ENCODE measurements at regions of chr22 and their contacts with region 1.

Region 1: GRCh38 chr22:40636380-40637182 is at the start of gene MRTFA:
- DNase-seq: peak; percentile 90 to 99 (median 98)
- ATAC-seq: peak; percentile 96
- H3K4me3 ChIP-seq: peak within 1 kb of the TSS; percentile 84
- H3K4me3 Mint-ChIP-seq: peak within 1 kb of the TSS; percentile 94 to 100 (median 97)
- H3K27ac ChIP-seq: peak within 1 kb of the TSS; percentile 85
- H3K27ac Mint-ChIP-seq: peak within 1 kb of the TSS; percentile 96 to 99 (median 97)
- H3K4me1 ChIP-seq: peaks cover 14 to 27% of the 10 kb centered on the region in 2 donors
- H3K4me1 Mint-ChIP-seq: peaks cover 27 to 56% (median 44%) of the 10 kb centered on the region in 7 donors
- H3K27me3 ChIP-seq: no peaks in the 10 kb centered on the region
- H3K27me3 Mint-ChIP-seq: no peaks in the 10 kb centered on the region
- total RNA-seq, gene MRTFA: 64.0 to 114 (median 104) TPM

Region 2: GRCh38 chr22:40368016-40368415 is 268.6 kb before region 1 on chr22:
- CTCF ChIA-PET with region 1: no interaction called
- POLR2A ChIA-PET with region 1: no interaction called
- intact Hi-C with region 1: loop called (anchors 2 to 5 kb)
- DNase-seq: no peak
- ATAC-seq: no peak
- H3K4me3 ChIP-seq: no peak overlapping the region
- H3K4me3 Mint-ChIP-seq: peak overlapping the region in 2 of 10 donors; percentile 17 to 33
- H3K27ac ChIP-seq: no peak overlapping the region
- H3K27ac Mint-ChIP-seq: peak overlapping the region in 1 of 9 donors; percentile 41
- H3K4me1 ChIP-seq: peaks cover 3 to 13% of the 10 kb centered on the region in 2 donors
- H3K4me1 Mint-ChIP-seq: peaks cover 12 to 23% (median 17%) of the 10 kb centered on the region in 7 donors
- H3K27me3 ChIP-seq: no peaks in the 10 kb centered on the region
- H3K27me3 Mint-ChIP-seq: no peaks in the 10 kb centered on the region

Region 3: DNA sequence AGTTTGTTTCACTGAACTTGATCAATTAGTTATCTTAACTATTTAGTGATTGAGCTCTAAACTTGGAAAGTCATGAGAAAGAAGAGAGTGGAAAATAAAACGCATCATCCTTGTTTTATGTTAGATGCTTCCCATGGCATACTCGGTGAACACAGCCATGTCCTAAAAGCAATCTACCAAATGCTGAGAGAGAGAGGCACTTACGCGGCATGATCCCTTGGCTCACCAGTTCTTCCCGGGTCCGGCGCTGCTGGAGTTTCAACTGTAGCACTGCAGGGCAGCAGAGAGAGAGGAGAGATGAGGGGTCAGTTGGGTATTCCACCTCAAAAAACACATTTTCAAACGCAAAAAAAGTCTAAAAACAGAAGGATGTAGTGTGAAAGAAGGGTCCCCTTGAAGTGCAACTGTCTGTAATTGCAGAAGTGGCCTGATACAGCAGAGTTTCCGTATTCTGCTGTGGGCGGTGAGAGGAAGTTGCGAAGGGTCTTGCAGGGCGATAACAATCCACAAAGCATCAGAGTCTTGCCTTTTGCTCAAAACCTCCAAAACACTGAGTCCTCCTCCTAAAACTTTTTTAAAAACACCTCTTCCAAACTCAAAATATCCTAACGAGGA is 173.5 kb before region 1 on chr22:
- CTCF ChIA-PET with region 1: interaction called, 3 read pairs
- POLR2A ChIA-PET with region 1: interaction called, 4 read pairs
- intact Hi-C with region 1: loop called in 1 of 2 experiments (anchors 1 kb)
- DNase-seq: peak in 8 of 9 donors; percentile 36 to 65 (median 50)
- ATAC-seq: peak; percentile 88
- H3K4me3 ChIP-seq: peak overlapping the region; percentile 90
- H3K4me3 Mint-ChIP-seq: peak overlapping the region; percentile 87 to 97 (median 96)
- H3K27ac ChIP-seq: peak overlapping the region; percentile 80
- H3K27ac Mint-ChIP-seq: peak overlapping the region; percentile 93 to 99 (median 97)
- H3K4me1 ChIP-seq: peaks cover 41 to 53% of the 10 kb centered on the region in 2 donors
- H3K4me1 Mint-ChIP-seq: peaks cover 46 to 92% (median 76%) of the 10 kb centered on the region in 7 donors
- H3K27me3 ChIP-seq: no peaks in the 10 kb centered on the region
- H3K27me3 Mint-ChIP-seq: no peaks in the 10 kb centered on the region

Region 4: GRCh38 chr22:40525249-40525884 is 111.2 kb before region 1 on chr22:
- CTCF ChIA-PET with region 1: interaction called, 10 read pairs
- POLR2A ChIA-PET with region 1: interaction called, 30 read pairs
- intact Hi-C with region 1: loop called in 1 of 2 experiments (anchors 2 kb)
- DNase-seq: peak; percentile 58 to 80 (median 76)
- ATAC-seq: peak; percentile 74
- H3K4me3 ChIP-seq: no peak overlapping the region
- H3K4me3 Mint-ChIP-seq: peak overlapping the region in 1 of 10 donors; percentile 48
- H3K27ac ChIP-seq: no peak overlapping the region
- H3K27ac Mint-ChIP-seq: peak overlapping the region in 8 of 9 donors; percentile 7 to 86 (median 58)
- H3K4me1 ChIP-seq: peaks cover 0 to 11% of the 10 kb centered on the region in 2 donors
- H3K4me1 Mint-ChIP-seq: peaks cover 13 to 55% (median 51%) of the 10 kb centered on the region in 7 donors
- H3K27me3 ChIP-seq: no peaks in the 10 kb centered on the region
- H3K27me3 Mint-ChIP-seq: no peaks in the 10 kb centered on the region

Region 5: DNA sequence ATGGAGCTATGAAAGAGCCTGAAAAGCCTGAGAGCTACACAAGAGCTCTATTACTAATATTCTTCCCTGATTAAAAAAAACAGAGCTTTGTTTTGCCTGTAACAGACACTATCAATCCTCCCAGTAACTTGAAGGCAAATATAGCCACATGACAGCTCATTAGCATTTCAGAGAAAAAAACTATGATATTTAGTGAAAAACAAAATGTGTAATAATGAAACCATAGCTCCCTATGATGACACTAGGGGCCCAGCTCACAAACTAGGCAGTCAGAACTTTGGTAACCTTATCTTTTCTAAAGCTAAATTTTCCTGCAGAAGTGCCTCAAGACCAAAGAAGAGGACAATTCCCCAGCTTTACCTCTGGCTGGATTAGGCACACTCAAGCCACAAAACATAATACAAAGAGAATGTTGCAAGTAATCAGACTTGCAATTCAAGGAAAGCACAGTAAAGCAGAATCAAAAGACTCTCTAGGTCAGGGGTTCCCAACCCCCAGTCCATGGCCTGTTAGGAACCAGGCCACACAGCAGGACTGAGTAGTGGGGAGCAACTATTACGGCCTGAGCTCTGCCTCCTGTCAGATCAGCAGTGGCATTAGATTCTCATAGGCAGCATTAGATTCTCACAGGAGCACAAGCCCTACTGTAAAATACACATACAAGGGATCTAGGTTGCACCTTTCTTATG is 53.4 kb before region 1 on chr22:
- CTCF ChIA-PET with region 1: no interaction called
- POLR2A ChIA-PET with region 1: interaction called, 3 read pairs
- intact Hi-C with region 1: loop called in 1 of 2 experiments (anchors 5 kb)
- DNase-seq: no peak
- ATAC-seq: no peak
- H3K4me3 ChIP-seq: no peak overlapping the region
- H3K4me3 Mint-ChIP-seq: peak overlapping the region in 1 of 10 donors; percentile 13
- H3K27ac ChIP-seq: no peak overlapping the region
- H3K27ac Mint-ChIP-seq: peak overlapping the region in 7 of 9 donors; percentile 6 to 60 (median 33)
- H3K4me1 ChIP-seq: peaks cover 0 to 8% of the 10 kb centered on the region in 2 donors
- H3K4me1 Mint-ChIP-seq: peaks cover 9 to 52% (median 37%) of the 10 kb centered on the region in 7 donors
- H3K27me3 ChIP-seq: no peaks in the 10 kb centered on the region
- H3K27me3 Mint-ChIP-seq: no peaks in the 10 kb centered on the region

Region 6: GRCh38 chr22:40714192-40714951 is 77.8 kb after region 1 on chr22:
- CTCF ChIA-PET with region 1: no interaction called
- POLR2A ChIA-PET with region 1: no interaction called
- intact Hi-C with region 1: no loop called
- DNase-seq: no peak
- ATAC-seq: no peak
- H3K4me3 ChIP-seq: no peak overlapping the region
- H3K4me3 Mint-ChIP-seq: peak overlapping the region in 9 of 10 donors; percentile 14 to 76 (median 62)
- H3K27ac ChIP-seq: no peak overlapping the region
- H3K27ac Mint-ChIP-seq: peak overlapping the region in 2 of 9 donors; percentile 31 to 46
- H3K4me1 ChIP-seq: peaks cover 0 to 5% of the 10 kb centered on the region in 2 donors
- H3K4me1 Mint-ChIP-seq: peaks cover 10 to 27% (median 21%) of the 10 kb centered on the region in 7 donors
- H3K27me3 ChIP-seq: no peaks in the 10 kb centered on the region
- H3K27me3 Mint-ChIP-seq: peaks cover 0 to 11% (median 0%) of the 10 kb centered on the region in 5 donors

Region 7: GRCh38 chr22:40950962-40951794 is 314.6 kb after region 1 on chr22 and contains the start of gene RBX1:
- CTCF ChIA-PET with region 1: no interaction called
- POLR2A ChIA-PET with region 1: interaction called, 3 read pairs
- intact Hi-C with region 1: loop called (anchors 1 kb)
- DNase-seq: peak; percentile 96 to 100 (median 99)
- ATAC-seq: peak; percentile 92
- H3K4me3 ChIP-seq: peak within 1 kb of the TSS; percentile 98
- H3K4me3 Mint-ChIP-seq: peak within 1 kb of the TSS; percentile 91 to 99 (median 98)
- H3K27ac ChIP-seq: peak within 1 kb of the TSS; percentile 99
- H3K27ac Mint-ChIP-seq: peak within 1 kb of the TSS; percentile 96 to 100 (median 99)
- H3K4me1 ChIP-seq: peaks cover 16 to 19% of the 10 kb centered on the region in 2 donors
- H3K4me1 Mint-ChIP-seq: peaks cover 20 to 43% (median 39%) of the 10 kb centered on the region in 7 donors
- H3K27me3 ChIP-seq: no peaks in the 10 kb centered on the region
- H3K27me3 Mint-ChIP-seq: no peaks in the 10 kb centered on the region
- total RNA-seq, gene RBX1: 28.9 to 91.3 (median 32.7) TPM

Region 8: GRCh38 chr22:41543854-41544670 is 907.5 kb after region 1 on chr22 and contains the start of gene POLR3H:
- CTCF ChIA-PET with region 1: no interaction called
- POLR2A ChIA-PET with region 1: no interaction called
- intact Hi-C with region 1: loop called in 1 of 2 experiments (anchors 10 kb)
- DNase-seq: peak; percentile 89 to 97 (median 95)
- ATAC-seq: peak; percentile 100
- H3K4me3 ChIP-seq: peak within 1 kb of the TSS; percentile 96
- H3K4me3 Mint-ChIP-seq: peak within 1 kb of the TSS; percentile 82 to 100 (median 97)
- H3K27ac ChIP-seq: peak within 1 kb of the TSS; percentile 84
- H3K27ac Mint-ChIP-seq: peak within 1 kb of the TSS; percentile 88 to 98 (median 95)
- H3K4me1 ChIP-seq: peaks cover 7 to 15% of the 10 kb centered on the region in 2 donors
- H3K4me1 Mint-ChIP-seq: peaks cover 30 to 52% (median 45%) of the 10 kb centered on the region in 7 donors
- H3K27me3 ChIP-seq: no peaks in the 10 kb centered on the region
- H3K27me3 Mint-ChIP-seq: no peaks in the 10 kb centered on the region
- total RNA-seq, gene POLR3H: 21.7 to 59.6 (median 28.5) TPM